IMR-90 (cell line): ENCODE measurements at regions of chr1 and their contacts with region 1.

Region 1: DNA sequence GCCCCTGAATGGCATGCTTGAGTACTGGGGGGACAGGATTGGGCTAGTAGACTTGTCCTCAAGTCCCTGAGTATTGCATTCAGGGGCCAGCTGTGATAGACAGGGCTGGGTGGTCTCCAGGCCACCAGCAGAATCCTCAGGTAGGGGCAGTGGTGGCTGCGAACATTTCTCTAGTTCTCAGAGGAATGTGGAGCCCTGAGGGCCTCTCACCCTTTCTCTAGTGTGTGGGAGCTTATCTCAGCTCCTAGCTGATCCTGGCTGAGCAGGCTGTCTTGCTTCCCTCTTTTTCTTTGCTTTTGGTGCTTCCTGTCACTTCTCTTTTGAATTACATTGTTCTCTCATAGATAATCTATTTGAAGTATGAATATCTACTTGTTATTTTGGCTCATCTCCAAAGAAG is 30.0 kb upstream of the PM20D1 start:
- DNase-seq: no peak
- ATAC-seq: no peak
- H3K4me3 ChIP-seq: no peak overlapping the region
- H3K27ac ChIP-seq: no peak overlapping the region
- H3K4me1 ChIP-seq: no peaks in the 10 kb centered on the region
- H3K27me3 ChIP-seq: peaks cover 11% of the 10 kb centered on the region
- CTCF ChIP-seq: no peak
- POLR2A ChIP-seq: no peak
- RAD21 ChIP-seq: no peak

Region 2: DNA sequence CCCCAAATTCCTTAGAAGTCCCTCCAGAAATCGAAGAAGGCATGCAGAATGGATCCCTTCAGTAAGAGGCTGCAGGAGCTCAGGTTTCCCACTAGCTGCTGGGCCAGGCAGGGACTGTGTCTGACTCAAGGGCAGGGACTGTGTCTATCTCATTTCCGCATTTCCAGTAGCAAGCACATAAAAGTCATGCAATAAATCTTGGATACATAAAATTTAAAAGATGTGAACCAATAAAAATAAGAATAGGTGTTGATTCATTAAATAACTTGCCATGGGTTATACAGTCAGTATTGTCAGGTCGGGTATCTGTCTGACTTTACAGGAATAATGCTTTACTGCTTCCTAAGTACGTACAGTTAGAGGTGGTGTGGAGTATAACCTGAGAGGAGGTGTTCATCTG is 45.2 kb before region 1 on chr1:
- CTCF ChIA-PET with region 1: no interaction called
- POLR2A ChIA-PET with region 1: no interaction called
- dilution Hi-C with region 1: no loop called
- in situ Hi-C with region 1: no loop called
- intact Hi-C with region 1: loop called (anchors 5 kb)
- DNase-seq: no peak
- ATAC-seq: no peak
- H3K4me3 ChIP-seq: no peak overlapping the region
- H3K27ac ChIP-seq: no peak overlapping the region
- H3K4me1 ChIP-seq: peaks cover 4% of the 10 kb centered on the region
- H3K27me3 ChIP-seq: peaks cover 10% of the 10 kb centered on the region
- CTCF ChIP-seq: no peak
- POLR2A ChIP-seq: no peak
- RAD21 ChIP-seq: no peak